HEK293 (cell line): ENCODE measurements at regions of chr10 and their contacts with region 1.

Region 1: GRCh38 chr10:80699602-80700039 is 161.9 kb downstream of the SH2D4B start:
- H3K4me3 ChIP-seq: no peak overlapping the region
- H3K27ac ChIP-seq: no peak overlapping the region
- H3K4me1 ChIP-seq: no peaks in the 10 kb centered on the region
- CTCF ChIP-seq: peak; percentile 94

Region 2: GRCh38 chr10:80580638-80581468 is 118.8 kb before region 1 on chr10:
- CTCF ChIA-PET with region 1: no interaction called
- POLR2A ChIA-PET with region 1: no interaction called
- H3K4me3 ChIP-seq: no peak overlapping the region
- H3K27ac ChIP-seq: no peak overlapping the region
- H3K4me1 ChIP-seq: no peaks in the 10 kb centered on the region
- CTCF ChIP-seq: no peak

Region 3: DNA sequence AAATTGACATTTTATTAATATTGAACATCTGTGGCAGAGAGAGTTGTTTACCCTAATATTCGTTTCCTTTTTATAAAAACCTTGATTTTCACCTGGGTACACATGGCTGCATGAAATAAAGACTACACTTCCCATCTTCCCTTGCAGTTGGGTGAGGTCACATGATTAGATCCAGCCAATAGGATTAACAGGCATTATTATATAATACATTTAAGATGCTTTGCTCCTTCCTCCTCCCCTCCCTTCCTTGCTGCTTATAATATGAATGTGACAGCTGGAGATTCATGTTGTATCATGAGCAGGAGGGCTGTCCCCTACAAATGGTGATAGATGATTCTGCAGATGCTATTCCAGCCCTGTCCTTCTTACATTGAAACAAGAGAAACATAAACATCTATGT is 15.4 kb before region 1 on chr10:
- CTCF ChIA-PET with region 1: interaction called, 13 read pairs
- POLR2A ChIA-PET with region 1: no interaction called
- H3K4me3 ChIP-seq: no peak overlapping the region
- H3K27ac ChIP-seq: no peak overlapping the region
- H3K4me1 ChIP-seq: no peaks in the 10 kb centered on the region
- CTCF ChIP-seq: no peak

Region 4: DNA sequence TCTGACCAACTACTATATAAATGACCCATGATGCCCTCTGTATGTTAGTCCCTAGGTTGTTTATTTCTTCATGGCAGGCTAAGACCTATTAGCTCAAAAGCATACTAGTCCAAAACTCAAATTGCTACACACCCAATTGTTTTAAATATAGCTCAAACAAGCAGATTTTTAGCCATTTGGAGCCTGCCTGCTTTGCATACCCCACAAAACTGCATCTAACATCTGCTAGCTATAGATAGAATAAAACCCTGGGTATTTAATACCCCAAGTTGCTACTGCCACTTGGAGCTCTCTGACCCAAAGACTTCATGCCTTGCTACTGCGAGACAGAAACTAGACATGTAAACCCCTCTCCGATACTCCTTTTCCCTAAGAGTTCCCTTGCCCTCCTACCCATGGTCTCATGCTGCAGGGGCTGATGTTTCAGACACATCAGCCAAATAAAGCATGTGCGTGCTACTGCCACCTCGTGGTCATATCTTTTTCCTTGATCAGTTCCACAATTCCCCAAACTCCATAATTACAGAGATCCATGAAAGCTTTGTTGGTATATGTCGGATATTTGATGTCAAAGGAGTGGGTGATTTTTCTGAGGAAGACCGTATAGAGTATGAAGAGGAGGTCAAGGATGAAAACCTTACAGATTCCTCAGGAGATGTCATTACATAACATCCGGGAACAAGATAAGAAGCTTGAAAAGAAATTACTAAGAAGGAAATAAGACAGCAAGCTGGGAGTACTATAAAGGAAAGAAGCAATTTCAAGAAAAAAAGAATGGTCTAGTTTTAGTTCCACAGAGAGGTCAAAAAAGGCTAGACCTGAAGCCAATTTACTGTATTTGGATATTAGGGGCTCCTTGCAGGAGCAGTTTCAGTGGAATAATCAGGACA is 224.7 kb after region 1 on chr10:
- CTCF ChIA-PET with region 1: interaction called, 25 read pairs
- POLR2A ChIA-PET with region 1: no interaction called
- H3K4me3 ChIP-seq: no peak overlapping the region
- H3K27ac ChIP-seq: no peak overlapping the region
- H3K4me1 ChIP-seq: no peaks in the 10 kb centered on the region
- CTCF ChIP-seq: no peak